ENCODE measurements at regions of chr1 and their contacts with region 1.

Region 1: DNA sequence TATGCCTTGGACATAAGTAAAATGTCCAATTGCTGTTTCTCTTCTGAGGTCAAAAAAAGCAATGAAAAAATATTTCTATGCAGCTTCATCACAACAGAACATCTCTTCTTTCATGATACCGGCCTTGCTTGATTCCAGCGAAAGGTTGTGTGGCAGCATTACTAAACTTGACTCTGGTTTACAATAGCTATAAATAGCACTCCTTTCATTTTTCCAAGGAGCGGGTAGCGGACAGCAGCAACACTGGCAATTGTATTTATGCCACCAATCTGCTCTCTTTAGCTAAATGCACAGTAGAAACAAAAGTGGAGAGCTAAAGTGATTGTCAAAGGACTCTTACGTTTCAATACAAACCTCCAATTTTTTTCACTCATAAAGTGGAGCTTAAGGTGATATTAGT is 7.5 kb upstream of the DAB1 start:
- DNase-seq: no peak
- H3K4me3 ChIP-seq: no peak overlapping the region
- H3K27me3 ChIP-seq: no peaks in the 10 kb centered on the region
- CTCF ChIP-seq: no peak

Region 2: DNA sequence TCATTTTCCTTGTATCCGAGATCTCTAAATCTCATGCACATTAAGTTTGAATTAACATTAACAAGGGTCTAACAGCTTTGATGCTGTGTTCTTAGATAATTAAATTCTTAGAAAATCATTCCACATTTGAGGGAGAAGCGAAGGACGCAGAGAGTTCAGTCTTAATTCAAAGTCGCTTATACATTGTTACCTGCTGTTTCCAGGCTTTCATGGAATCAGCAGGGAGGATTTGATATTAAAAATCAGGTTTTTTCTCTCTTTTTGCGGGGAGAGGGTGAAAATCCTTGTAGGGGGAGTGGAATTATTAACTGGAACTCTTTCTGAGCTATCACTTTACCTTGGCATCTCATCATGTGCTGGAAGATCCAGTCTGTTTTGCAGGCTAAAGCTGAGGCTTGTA is 20.1 kb after region 1 on chr1:
- CTCF ChIA-PET with region 1: interaction called, 3 read pairs
- POLR2A ChIA-PET with region 1: interaction called, 12 read pairs
- DNase-seq: no peak
- H3K4me3 ChIP-seq: no peak overlapping the region
- H3K27me3 ChIP-seq: 0 out of 2 replicates have a peak, but pooled peaks cover 1% of the 10 kb centered on the region
- CTCF ChIP-seq: no peak

Measured in BJ (cell line).